ENCODE measurements at regions of chr2 and their contacts with region 1.

Region 1: DNA sequence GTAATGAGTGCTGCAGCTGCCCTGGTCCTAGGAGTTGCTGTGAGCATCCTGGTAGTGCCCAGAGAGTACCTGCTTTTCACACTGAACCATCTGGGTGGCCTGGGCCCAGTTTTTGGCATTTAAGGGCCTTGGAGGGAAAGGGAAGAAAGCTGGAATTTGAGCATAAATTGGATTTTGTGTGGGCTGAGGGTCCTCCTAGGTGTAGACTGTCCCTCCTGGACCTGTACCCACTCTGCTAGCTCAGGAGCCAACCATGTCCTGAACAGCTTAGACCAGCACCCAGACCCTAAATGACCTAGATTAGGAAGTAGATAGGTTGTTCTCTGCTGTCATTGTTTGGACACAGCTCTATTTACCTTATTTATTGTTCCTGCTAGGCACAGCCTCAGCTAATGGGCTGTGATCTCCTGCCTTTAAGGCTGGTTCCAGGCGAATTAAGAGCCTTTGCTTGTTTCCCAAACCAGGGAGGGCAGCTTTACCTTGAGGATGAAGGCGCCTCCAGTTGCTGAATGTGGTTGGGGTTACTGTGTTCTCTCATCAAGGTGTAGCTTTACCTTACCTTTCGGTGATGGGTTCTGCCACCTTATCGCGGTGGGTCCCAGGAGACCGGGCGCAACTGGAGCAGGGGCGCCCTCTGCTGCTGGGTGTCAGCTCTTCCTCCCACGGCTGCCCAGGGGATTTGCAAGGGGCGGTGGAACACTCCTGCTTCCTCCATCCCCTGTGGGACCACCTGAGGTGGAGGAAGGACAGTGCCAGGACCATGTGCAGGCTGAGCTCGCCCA is 34.4 kb downstream of the ITGA6 start:
- DNase-seq: peak; percentile 74 to 81 (median 76)
- ATAC-seq: peak; percentile 60
- H3K4me3 ChIP-seq: no peak overlapping the region
- H3K27ac ChIP-seq: peak overlapping the region; percentile 63 to 74 (median 66)
- H3K4me1 ChIP-seq: peaks cover 68% of the 10 kb centered on the region
- H3K27me3 ChIP-seq: no peaks in the 10 kb centered on the region
- CTCF ChIP-seq: peak; percentile 81 to 93 (median 90)
- POLR2A ChIP-seq: no peak

Region 2: GRCh38 chr2:172172513-172173173 is 289.1 kb before region 1 on chr2:
- intact Hi-C with region 1: loop called (anchors 5 kb)
- DNase-seq: peak; percentile 82 to 87 (median 84)
- ATAC-seq: peak; percentile 99
- H3K4me3 ChIP-seq: peak overlapping the region in 1 of 2 donors; percentile 51
- H3K27ac ChIP-seq: peak overlapping the region in 2 of 4 donors; percentile 39 to 41
- H3K4me1 ChIP-seq: peaks cover 20% of the 10 kb centered on the region
- H3K27me3 ChIP-seq: no peaks in the 10 kb centered on the region
- CTCF ChIP-seq: peak; percentile 73 to 98 (median 90)
- POLR2A ChIP-seq: peak in 2 of 3 donors; percentile 24 to 46

Measured in body of pancreas (tissue), 4 donors.